ENCODE measurements at regions of chr1 and their contacts with region 1.

Region 1: GRCh38 chr1:47388891-47389238 is 27.2 kb upstream of the FOXE3 start:
- DNase-seq: peak; percentile 60
- H3K4me3 Mint-ChIP-seq: no peak overlapping the region
- H3K27ac Mint-ChIP-seq: no peak overlapping the region
- H3K4me1 Mint-ChIP-seq: no peaks in the 10 kb centered on the region
- H3K27me3 Mint-ChIP-seq: peaks cover 2% of the 10 kb centered on the region

Region 2: GRCh38 chr1:47231301-47232186 is 157.3 kb before region 1 on chr1:
- CTCF ChIA-PET with region 1: no interaction called
- POLR2A ChIA-PET with region 1: no interaction called
- DNase-seq: no peak
- H3K4me3 Mint-ChIP-seq: peak overlapping the region; percentile 60
- H3K27ac Mint-ChIP-seq: peak overlapping the region; percentile 52
- H3K4me1 Mint-ChIP-seq: peaks cover 37% of the 10 kb centered on the region
- H3K27me3 Mint-ChIP-seq: peaks cover 88% of the 10 kb centered on the region

Region 3: DNA sequence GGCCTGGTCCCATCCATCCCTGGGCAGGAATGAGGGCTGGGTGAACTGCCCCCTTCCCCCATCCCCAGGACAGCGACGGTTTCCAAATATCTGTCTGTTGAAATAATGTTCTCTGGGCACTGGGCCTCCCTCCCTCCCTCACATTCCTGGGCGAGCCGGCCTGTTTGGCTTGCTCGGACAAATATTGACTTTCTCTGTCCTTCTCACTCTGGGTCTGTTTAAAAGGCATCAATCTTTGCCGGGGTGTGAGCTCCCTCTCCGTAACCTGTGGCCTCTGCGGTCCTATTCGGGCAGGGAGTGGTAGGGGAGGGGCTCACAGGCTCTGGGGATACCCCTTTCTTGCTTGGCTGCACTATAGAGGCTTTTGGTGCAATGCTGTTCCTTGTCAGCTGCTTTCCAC is 89.2 kb after region 1 on chr1:
- CTCF ChIA-PET with region 1: no interaction called
- POLR2A ChIA-PET with region 1: no interaction called
- DNase-seq: no peak
- H3K4me3 Mint-ChIP-seq: no peak overlapping the region
- H3K27ac Mint-ChIP-seq: no peak overlapping the region
- H3K4me1 Mint-ChIP-seq: no peaks in the 10 kb centered on the region
- H3K27me3 Mint-ChIP-seq: peaks cover 11% of the 10 kb centered on the region

Region 4: DNA sequence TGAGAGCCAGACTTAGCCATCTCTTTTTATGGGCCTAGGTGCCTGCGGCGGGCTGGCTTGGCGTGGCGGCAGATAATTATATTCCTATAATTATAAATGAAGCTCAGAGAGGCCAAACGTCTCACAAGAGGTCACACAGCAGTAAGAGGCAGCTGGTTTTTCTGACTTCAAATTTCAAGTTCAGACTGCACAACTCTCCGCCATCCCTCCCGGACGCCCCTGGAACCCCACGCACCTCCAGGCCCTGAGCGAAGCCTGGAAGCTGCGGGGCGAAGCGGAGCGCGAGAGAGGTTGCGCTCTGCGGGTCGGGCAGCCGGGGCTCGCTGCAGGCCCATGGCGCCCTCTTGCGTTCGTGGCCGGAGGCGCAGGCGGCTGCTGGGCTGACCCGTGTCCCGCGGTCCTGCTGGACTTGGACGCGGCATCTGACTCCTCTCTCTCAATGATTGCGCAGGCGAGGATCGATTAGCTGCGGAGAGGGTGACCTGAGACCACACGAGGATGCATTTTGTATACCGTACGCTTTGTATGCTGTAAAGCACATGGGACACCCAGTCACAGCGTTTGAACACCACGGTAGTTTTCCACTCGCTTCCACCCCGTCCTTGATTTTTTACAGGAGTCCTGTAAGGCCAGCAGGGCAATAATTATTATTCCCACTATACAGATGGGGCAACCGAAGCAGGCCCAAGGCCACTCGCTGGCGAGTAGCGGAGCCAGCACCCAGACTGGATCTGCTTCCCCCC is 321.6 kb after region 1 on chr1:
- CTCF ChIA-PET with region 1: interaction called, 11 read pairs
- POLR2A ChIA-PET with region 1: no interaction called
- DNase-seq: peak; percentile 69
- H3K4me3 Mint-ChIP-seq: no peak overlapping the region
- H3K27ac Mint-ChIP-seq: peak overlapping the region; percentile 16
- H3K4me1 Mint-ChIP-seq: peaks cover 3% of the 10 kb centered on the region
- H3K27me3 Mint-ChIP-seq: peaks cover 71% of the 10 kb centered on the region